H1 (cell line): ENCODE measurements at regions of chr1 and their contacts with region 1.

Region 1: DNA sequence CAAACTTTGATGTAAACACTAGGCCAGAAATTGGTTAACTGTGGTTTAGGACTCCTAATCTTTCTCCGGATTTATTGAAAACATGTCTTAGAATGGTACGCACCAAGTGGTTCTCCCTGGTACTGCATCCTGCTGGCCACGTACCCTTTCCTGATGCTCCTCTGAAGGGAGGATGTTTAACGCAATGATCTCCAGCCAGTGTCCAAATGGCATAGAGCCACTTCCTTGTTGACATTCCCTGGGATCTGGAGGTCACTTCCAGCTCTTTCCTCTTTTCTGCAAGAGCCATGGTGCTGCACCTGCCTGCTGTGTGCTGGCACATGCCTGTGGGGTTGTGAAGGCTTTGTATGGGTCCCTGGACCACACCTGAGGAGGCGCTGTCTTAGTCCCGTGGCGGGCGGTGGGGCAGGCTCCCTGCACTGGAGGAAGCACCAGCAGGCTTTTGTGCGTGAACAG is 53.9 kb downstream of the GALNT2 start:
- DNase-seq: peak in 1 of 2 experiments; percentile 77
- H3K4me3 ChIP-seq: no peak overlapping the region
- H3K27ac ChIP-seq: no peak overlapping the region
- H3K4me1 ChIP-seq: peaks cover under 1 to 6% (median 2%) of the 10 kb centered on the region in 4 experiments; a peak in 5 of 7 replicates
- H3K27me3 ChIP-seq: no peaks in the 10 kb centered on the region; a peak in 1 of 7 replicates
- CTCF ChIP-seq: peak; percentile 12 to 83 (median 63); a peak in 3 of 4 replicates
- EP300 ChIP-seq: no peak
- POLR2A ChIP-seq: no peak
- RAD21 ChIP-seq: peak; percentile 19 to 44; a peak in 1 of 4 replicates

Region 2: GRCh38 chr1:230002164-230002803 is 118.7 kb before region 1 on chr1:
- CTCF ChIA-PET with region 1: no interaction called
- POLR2A ChIA-PET with region 1: no interaction called
- DNase-seq: no peak
- H3K4me3 ChIP-seq: no peak overlapping the region
- H3K27ac ChIP-seq: no peak overlapping the region
- H3K4me1 ChIP-seq: peaks cover 0 to 3% (median 0%) of the 10 kb centered on the region in 4 experiments; a peak in 2 of 7 replicates
- H3K27me3 ChIP-seq: no peaks in the 10 kb centered on the region
- CTCF ChIP-seq: no peak
- EP300 ChIP-seq: no peak
- POLR2A ChIP-seq: no peak
- RAD21 ChIP-seq: no peak

Region 3: GRCh38 chr1:230087028-230087716 is 33.8 kb before region 1 on chr1:
- CTCF ChIA-PET with region 1: interaction called, 15 read pairs
- POLR2A ChIA-PET with region 1: no interaction called
- DNase-seq: no peak
- H3K4me3 ChIP-seq: no peak overlapping the region
- H3K27ac ChIP-seq: no peak overlapping the region
- H3K4me1 ChIP-seq: peaks cover 0 to 15% (median 5%) of the 10 kb centered on the region in 4 experiments; a peak in 5 of 7 replicates
- H3K27me3 ChIP-seq: no peaks in the 10 kb centered on the region
- CTCF ChIP-seq: no peak
- EP300 ChIP-seq: no peak
- POLR2A ChIP-seq: no peak
- RAD21 ChIP-seq: no peak

Region 4: DNA sequence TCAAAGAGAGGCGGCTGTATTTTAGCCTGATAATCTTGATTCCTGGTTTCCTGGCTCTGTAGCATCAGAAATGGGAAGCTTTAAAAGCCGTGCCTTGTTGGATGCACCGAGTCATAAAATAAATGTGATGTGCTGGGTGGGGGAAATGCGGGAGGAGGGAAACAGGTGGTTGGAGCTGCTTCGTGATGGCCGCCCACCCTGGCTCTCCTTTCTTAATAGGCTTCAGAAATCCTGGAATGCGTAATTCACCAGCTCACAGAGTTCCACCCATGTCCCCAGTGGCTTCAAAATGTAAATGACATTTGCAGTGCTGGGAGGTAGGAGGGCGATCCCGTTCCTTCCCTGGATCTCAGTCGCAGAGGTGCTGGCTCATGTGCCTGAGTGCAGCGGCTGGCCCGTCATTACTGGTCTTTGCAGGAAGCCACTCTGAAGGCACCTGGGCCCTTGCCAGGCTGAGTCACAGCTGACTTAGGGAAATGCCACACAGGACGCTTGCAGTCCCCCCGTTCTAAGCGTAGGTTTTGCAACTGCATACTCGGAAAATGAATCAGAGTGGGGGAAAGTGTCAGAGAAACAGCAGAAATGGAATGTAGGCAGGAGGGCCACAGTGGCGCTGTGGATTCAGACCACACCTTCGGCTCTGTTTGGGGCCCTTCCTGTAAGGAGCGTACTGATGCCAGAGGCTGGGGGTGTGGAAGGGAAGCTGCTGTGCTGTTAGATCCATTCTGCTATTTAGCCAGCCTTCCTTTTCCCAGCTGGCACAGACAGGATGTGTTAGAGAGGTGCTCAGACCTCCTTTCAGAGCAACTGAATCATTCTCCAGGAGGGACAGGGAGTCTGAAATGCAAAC is 16.3 kb before region 1 on chr1:
- CTCF ChIA-PET with region 1: interaction called, 79 read pairs
- POLR2A ChIA-PET with region 1: no interaction called
- DNase-seq: peak in 1 of 2 experiments; percentile 31
- H3K4me3 ChIP-seq: no peak overlapping the region
- H3K27ac ChIP-seq: peak overlapping the region; percentile 18; the same call in 1 of the 2 replicates
- H3K4me1 ChIP-seq: peaks cover 3 to 25% (median 17%) of the 10 kb centered on the region in 4 experiments; a peak in 6 of 7 replicates
- H3K27me3 ChIP-seq: no peaks in the 10 kb centered on the region
- CTCF ChIP-seq: no peak
- EP300 ChIP-seq: no peak
- POLR2A ChIP-seq: no peak
- RAD21 ChIP-seq: no peak

Region 5: DNA sequence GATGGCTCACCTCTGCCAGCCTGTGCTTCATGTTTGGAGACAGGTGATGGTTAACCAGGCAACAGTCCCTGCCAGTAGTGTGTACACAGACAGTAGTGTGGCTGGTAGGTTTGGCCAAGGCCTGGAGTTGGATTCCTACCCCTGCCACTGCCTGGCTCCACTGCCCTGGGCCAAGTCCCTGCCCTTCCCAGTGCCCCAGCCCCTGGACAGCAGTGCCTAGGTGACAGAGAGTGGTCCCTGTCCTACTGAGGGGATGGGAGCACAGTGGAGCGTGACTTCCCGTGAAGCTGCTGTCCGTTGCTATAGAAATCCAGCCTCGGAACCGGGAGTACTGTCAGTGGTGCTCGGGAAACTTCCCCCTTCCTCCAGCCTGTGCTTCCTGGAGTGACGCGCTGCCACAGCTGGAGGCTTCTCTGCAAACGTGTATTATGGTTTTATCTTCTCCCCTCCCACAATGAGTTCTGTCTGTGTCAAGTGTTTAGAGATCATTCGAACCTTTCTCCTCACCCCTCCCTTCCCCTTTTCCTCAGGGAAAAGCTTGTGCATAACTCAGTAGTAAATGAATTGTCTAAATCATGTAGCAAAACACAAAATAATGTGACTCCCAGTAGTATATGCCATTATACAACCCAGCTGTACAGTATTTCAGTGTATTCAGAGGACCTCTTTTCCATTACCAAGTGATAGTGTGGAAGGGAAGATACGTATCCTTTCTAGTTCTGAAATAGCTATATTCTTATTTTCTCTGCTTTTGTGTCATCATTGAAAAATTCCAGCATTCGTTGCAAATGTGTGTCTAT is 19.5 kb after region 1 on chr1:
- CTCF ChIA-PET with region 1: interaction called, 35 read pairs
- POLR2A ChIA-PET with region 1: interaction called, 3 read pairs
- DNase-seq: no peak
- H3K4me3 ChIP-seq: no peak overlapping the region
- H3K27ac ChIP-seq: no peak overlapping the region
- H3K4me1 ChIP-seq: peaks cover 0 to 15% (median 10%) of the 10 kb centered on the region in 4 experiments; a peak in 4 of 7 replicates
- H3K27me3 ChIP-seq: no peaks in the 10 kb centered on the region
- CTCF ChIP-seq: no peak
- EP300 ChIP-seq: no peak
- POLR2A ChIP-seq: no peak
- RAD21 ChIP-seq: no peak

Region 6: GRCh38 chr1:230250666-230251065 is 129.7 kb after region 1 on chr1:
- CTCF ChIA-PET with region 1: no interaction called
- POLR2A ChIA-PET with region 1: no interaction called
- DNase-seq: peak in 1 of 2 experiments; percentile 43
- H3K4me3 ChIP-seq: no peak overlapping the region
- H3K27ac ChIP-seq: no peak overlapping the region
- H3K4me1 ChIP-seq: peaks cover 6 to 21% (median 14%) of the 10 kb centered on the region in 4 experiments
- H3K27me3 ChIP-seq: no peaks in the 10 kb centered on the region
- CTCF ChIP-seq: no peak
- EP300 ChIP-seq: no peak
- POLR2A ChIP-seq: no peak
- RAD21 ChIP-seq: no peak

Region 7: DNA sequence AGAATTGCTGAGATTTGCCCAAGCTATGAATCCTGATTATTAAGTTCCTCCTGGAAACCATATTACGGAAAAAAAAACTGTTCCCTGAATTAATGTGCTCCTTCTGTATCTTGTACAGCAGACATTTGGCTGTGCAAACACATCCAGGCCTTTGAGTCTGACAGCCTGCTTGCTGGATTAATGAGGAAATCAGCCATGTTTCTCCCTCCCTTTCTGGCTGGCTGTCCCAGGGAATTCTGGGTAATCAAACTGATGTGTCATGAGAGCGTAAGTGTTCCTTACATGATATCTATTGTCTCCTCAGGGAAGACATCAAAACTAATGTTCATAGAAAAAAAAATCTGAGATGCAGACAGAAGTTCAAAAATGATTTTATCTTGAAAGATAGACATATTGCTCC is 286.4 kb after region 1 on chr1:
- CTCF ChIA-PET with region 1: no interaction called
- POLR2A ChIA-PET with region 1: no interaction called
- DNase-seq: no peak
- H3K4me3 ChIP-seq: no peak overlapping the region
- H3K27ac ChIP-seq: no peak overlapping the region
- H3K4me1 ChIP-seq: no peaks in the 10 kb centered on the region
- H3K27me3 ChIP-seq: no peaks in the 10 kb centered on the region
- CTCF ChIP-seq: no peak
- EP300 ChIP-seq: no peak
- POLR2A ChIP-seq: no peak
- RAD21 ChIP-seq: no peak